ENCODE measurements at regions of chr11 and their contacts with region 1.

Region 1: DNA sequence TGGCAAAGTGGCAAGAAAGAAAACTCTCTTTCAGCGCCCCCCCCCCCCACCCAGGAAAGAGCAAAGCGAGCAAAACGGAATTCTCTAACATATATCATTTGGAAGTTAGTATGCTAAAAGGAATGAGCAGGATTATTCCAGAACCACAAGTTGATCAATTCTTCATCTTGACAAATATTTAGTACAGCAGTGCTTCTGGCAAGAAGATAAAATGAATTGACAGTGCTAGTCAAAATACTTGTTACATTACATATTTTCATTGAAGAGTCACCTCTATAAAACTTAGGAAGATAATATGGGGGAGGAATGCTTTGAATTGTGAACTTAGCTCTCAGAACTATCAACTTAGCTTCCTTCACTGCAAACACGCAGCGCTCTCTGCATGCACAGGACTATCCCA is 377.4 kb downstream of the DYNC2H1 start:
- DNase-seq: no peak
- H3K4me3 ChIP-seq: no peak overlapping the region
- H3K27ac ChIP-seq: no peak overlapping the region
- H3K4me1 ChIP-seq: no peaks in the 10 kb centered on the region
- H3K27me3 ChIP-seq: no peaks in the 10 kb centered on the region
- CTCF ChIP-seq: no peak
- POLR2A ChIP-seq: no peak

Region 2: GRCh38 chr11:103464420-103464819 is 22.2 kb before region 1 on chr11:
- intact Hi-C with region 1: loop called (anchors 2 kb)
- DNase-seq: no peak
- H3K4me3 ChIP-seq: no peak overlapping the region
- H3K27ac ChIP-seq: no peak overlapping the region
- H3K4me1 ChIP-seq: no peaks in the 10 kb centered on the region
- H3K27me3 ChIP-seq: no peaks in the 10 kb centered on the region
- CTCF ChIP-seq: no peak
- POLR2A ChIP-seq: no peak

Region 3: DNA sequence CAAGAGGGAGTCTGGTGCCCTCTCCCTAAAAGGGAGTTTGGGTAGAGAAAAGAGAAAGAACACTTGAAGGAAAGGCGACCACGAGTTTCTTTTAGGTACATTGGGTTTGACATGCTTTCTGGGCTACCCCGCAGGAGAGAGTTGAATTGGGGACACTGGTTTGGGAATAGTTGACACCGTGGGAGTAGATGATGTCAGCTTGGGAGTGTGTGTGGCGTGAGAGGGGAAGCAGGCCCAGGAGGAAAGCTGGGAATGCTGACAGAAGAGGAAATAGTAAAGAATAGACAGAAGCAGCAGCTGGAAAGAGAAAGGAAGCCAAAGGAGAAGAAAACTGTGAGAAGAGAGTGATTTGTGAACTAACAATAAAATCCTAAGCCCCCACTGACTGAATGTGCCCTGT is 65.5 kb after region 1 on chr11:
- intact Hi-C with region 1: no loop called
- DNase-seq: no peak
- H3K4me3 ChIP-seq: no peak overlapping the region
- H3K27ac ChIP-seq: no peak overlapping the region
- H3K4me1 ChIP-seq: no peaks in the 10 kb centered on the region
- H3K27me3 ChIP-seq: no peaks in the 10 kb centered on the region
- CTCF ChIP-seq: no peak
- POLR2A ChIP-seq: no peak

Region 4: GRCh38 chr11:103586756-103587155 is 100.2 kb after region 1 on chr11:
- intact Hi-C with region 1: no loop called
- DNase-seq: no peak
- H3K4me3 ChIP-seq: no peak overlapping the region
- H3K27ac ChIP-seq: no peak overlapping the region
- H3K4me1 ChIP-seq: peaks cover 0 to 9% (median 0%) of the 10 kb centered on the region in 6 donors
- H3K27me3 ChIP-seq: no peaks in the 10 kb centered on the region
- CTCF ChIP-seq: no peak
- POLR2A ChIP-seq: no peak

Measured in spleen (tissue), 13 donors.